ENCODE measurements at regions of chr1 and their contacts with region 1.

Region 1: DNA sequence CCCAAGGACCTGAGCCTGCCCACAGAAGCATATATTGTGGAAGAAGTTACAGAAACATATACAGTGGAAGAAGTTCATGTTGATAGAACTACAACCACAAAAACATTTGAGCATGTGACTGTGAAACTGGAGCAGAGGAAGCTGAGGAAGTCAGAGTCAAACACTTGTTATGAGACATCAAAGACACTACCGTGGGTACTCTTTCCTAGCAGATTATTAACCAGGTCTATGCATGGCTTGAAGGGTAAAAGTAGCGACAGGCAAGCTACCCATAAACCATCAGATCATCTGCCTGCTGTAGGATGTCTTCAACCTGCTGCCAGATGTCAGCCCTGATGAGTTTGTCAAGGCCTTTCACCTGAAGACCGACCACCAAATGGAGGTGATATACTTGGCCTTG is 35.8 kb downstream of the IVNS1ABP start:
- DNase-seq: peak in 3 of 5 donors; percentile 3 to 60 (median 59)
- H3K4me3 ChIP-seq: peak overlapping the region; percentile 29
- H3K4me3 Mint-ChIP-seq: peak overlapping the region in 6 of 7 donors; percentile 64 to 79 (median 71)
- H3K27ac ChIP-seq: no peak overlapping the region
- H3K27ac Mint-ChIP-seq: peak overlapping the region; percentile 86 to 100 (median 96)
- H3K4me1 ChIP-seq: peaks cover 56% of the 10 kb centered on the region
- H3K4me1 Mint-ChIP-seq: peaks cover 48 to 66% (median 66%) of the 10 kb centered on the region in 3 donors
- H3K27me3 ChIP-seq: no peaks in the 10 kb centered on the region
- H3K27me3 Mint-ChIP-seq: peaks cover 0 to 2% of the 10 kb centered on the region in 2 donors

Region 2: DNA sequence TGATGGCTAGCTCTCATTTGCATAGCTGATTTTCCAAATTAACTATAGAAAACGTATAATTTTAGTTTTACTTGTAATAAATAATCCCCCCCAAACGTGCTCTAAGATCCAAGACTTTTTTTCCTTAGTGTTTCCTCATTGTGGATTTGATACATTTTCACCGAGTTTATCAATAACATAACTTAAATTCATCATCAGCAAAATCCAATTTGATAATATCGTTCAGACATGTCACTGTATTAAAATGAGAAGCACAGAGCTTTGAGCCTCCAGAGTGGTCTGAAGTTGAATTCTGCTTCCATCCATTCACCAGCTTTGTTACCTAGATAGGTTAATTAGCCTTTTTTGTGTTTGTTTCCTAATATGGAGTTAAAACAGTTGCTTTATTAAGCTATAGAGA is 15.9 kb before region 1 on chr1:
- CTCF ChIA-PET with region 1: interaction called, 10 read pairs
- POLR2A ChIA-PET with region 1: no interaction called
- DNase-seq: no peak
- H3K4me3 ChIP-seq: no peak overlapping the region
- H3K4me3 Mint-ChIP-seq: no peak overlapping the region
- H3K27ac ChIP-seq: no peak overlapping the region
- H3K27ac Mint-ChIP-seq: no peak overlapping the region
- H3K4me1 ChIP-seq: no peaks in the 10 kb centered on the region
- H3K4me1 Mint-ChIP-seq: no peaks in the 10 kb centered on the region
- H3K27me3 ChIP-seq: no peaks in the 10 kb centered on the region
- H3K27me3 Mint-ChIP-seq: peaks cover 0 to 2% of the 10 kb centered on the region in 2 donors

Measured in CD8-positive, alpha-beta memory T cell (primary cell).